Activated CD8-positive, alpha-beta T cell treated with anti-CD3 and anti-CD28 coated beads, Interleukin-2, amount 10 ng/mL, durations not matched to agents 7 days and 5 days (primary cell): ENCODE measurements at regions of chr2 and their contacts with region 1.

Region 1: GRCh38 chr2:181104512-181105115 is 124.2 kb downstream of the UBE2E3 start:
- DNase-seq: peak; percentile 41
- ATAC-seq: peak; percentile 12
- H3K4me3 Mint-ChIP-seq: no peak overlapping the region
- H3K27ac Mint-ChIP-seq: peak overlapping the region; percentile 1
- H3K4me1 Mint-ChIP-seq: peaks cover 47% of the 10 kb centered on the region
- H3K27me3 Mint-ChIP-seq: no peaks in the 10 kb centered on the region

Region 2: GRCh38 chr2:181123798-181124231 is 19.2 kb after region 1 on chr2:
- CTCF ChIA-PET with region 1: interaction called, 22 read pairs
- POLR2A ChIA-PET with region 1: no interaction called
- DNase-seq: peak; percentile 85
- ATAC-seq: peak; percentile 94
- H3K4me3 Mint-ChIP-seq: peak overlapping the region; percentile 77
- H3K27ac Mint-ChIP-seq: peak overlapping the region; percentile 86
- H3K4me1 Mint-ChIP-seq: peaks cover 70% of the 10 kb centered on the region
- H3K27me3 Mint-ChIP-seq: no peaks in the 10 kb centered on the region

Region 3: GRCh38 chr2:181140414-181140813 is 35.8 kb after region 1 on chr2:
- CTCF ChIA-PET with region 1: interaction called, 52 read pairs
- POLR2A ChIA-PET with region 1: interaction called, 6 read pairs
- DNase-seq: no peak
- ATAC-seq: no peak
- H3K4me3 Mint-ChIP-seq: peak overlapping the region; percentile 65
- H3K27ac Mint-ChIP-seq: peak overlapping the region; percentile 92
- H3K4me1 Mint-ChIP-seq: peaks cover 72% of the 10 kb centered on the region
- H3K27me3 Mint-ChIP-seq: no peaks in the 10 kb centered on the region

Region 4: DNA sequence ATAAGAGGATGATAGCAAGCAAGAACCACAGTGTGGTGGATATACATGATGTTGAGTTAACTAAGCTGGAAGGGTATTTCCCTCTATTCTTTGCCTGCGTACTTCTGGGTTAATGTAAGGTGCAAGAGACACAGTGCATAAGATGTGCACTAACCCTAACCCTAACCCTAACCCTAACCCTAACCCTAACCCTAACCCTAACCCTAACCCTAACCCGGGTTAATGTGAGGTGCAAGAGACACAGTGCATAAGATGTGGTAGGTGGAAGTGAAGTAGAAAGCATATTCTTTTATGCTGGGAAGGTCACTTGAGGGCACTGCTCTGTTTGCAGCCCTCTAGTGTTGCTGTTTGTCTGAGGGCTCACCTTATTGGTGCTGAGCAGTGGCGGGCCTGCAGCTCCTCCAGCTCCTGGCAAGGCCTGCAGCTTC is 171.0 kb after region 1 on chr2:
- CTCF ChIA-PET with region 1: interaction called, 17 read pairs
- POLR2A ChIA-PET with region 1: no interaction called
- DNase-seq: peak; percentile 50
- ATAC-seq: peak; percentile 92
- H3K4me3 Mint-ChIP-seq: no peak overlapping the region
- H3K27ac Mint-ChIP-seq: peak overlapping the region; percentile 84
- H3K4me1 Mint-ChIP-seq: peaks cover 39% of the 10 kb centered on the region
- H3K27me3 Mint-ChIP-seq: no peaks in the 10 kb centered on the region

Region 5: DNA sequence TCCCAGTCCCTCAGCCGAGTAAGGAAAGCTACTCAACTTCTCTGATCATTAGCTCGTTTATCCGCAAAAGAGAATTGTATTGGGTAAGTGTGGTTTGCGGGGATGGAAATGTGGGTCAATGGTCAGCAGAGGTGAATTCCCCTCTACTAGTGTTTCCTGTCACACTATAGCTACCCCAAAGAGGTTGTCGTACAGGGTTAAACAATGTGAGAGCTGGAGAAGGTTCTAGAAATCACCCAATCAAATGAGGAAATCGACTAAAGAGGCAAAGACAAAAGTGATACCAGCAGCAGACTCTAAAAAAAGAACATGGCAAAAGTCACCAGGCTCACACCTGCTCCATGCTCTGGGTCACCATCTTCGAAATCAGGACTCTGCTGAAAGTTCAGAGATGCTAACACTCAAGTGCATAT is 207.9 kb after region 1 on chr2:
- CTCF ChIA-PET with region 1: interaction called, 20 read pairs
- POLR2A ChIA-PET with region 1: interaction called, 5 read pairs
- DNase-seq: peak; percentile 65
- ATAC-seq: peak; percentile 65
- H3K4me3 Mint-ChIP-seq: peak overlapping the region; percentile 67
- H3K27ac Mint-ChIP-seq: peak overlapping the region; percentile 96
- H3K4me1 Mint-ChIP-seq: peaks cover 53% of the 10 kb centered on the region
- H3K27me3 Mint-ChIP-seq: no peaks in the 10 kb centered on the region

Region 6: DNA sequence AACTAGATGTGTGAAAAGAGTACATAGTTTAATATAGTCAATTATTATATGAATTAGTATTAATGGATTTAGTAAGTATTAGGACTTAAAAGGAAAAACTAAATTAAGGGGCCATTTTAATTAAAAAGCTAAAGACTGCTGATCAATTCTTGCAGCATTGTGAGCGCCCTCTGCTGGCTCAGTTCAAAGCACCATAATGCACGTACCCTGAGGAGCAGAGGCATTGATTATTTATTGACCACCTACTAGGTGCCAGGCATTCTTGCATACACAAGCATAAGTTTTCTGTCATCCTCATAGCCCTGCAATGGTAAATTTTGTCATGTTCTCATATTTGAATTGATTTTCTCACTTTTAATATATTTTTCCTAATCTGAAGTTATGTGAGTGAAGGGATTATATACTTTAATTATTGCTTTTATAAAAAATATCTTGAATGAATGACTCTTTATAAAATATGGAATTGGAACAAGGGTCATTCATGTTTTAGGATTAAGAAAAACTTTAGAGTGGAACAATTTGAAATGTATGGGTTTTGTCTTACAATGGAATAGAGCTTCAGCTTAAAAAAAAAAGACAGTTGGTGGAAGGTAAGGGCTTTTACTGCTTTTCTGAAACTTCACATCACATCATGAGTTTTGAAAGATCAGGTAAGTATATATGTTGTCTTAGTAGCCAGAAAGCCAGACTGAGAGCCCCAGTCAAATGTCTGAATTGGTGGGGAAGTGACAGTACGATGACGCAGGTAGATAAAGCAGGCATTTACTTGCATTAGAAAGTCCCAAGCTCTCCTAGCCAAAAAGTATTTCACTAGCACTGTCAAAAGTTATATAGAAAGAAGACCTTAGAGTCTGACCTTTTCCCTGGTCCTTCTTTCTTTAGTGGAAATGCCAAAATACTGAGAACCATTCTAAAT is 362.3 kb after region 1 on chr2:
- CTCF ChIA-PET with region 1: interaction called, 60 read pairs
- POLR2A ChIA-PET with region 1: no interaction called
- DNase-seq: peak; percentile 90
- ATAC-seq: peak; percentile 34
- H3K4me3 Mint-ChIP-seq: peak overlapping the region; percentile 22
- H3K27ac Mint-ChIP-seq: peak overlapping the region; percentile 62
- H3K4me1 Mint-ChIP-seq: peaks cover 85% of the 10 kb centered on the region
- H3K27me3 Mint-ChIP-seq: no peaks in the 10 kb centered on the region

Region 7: DNA sequence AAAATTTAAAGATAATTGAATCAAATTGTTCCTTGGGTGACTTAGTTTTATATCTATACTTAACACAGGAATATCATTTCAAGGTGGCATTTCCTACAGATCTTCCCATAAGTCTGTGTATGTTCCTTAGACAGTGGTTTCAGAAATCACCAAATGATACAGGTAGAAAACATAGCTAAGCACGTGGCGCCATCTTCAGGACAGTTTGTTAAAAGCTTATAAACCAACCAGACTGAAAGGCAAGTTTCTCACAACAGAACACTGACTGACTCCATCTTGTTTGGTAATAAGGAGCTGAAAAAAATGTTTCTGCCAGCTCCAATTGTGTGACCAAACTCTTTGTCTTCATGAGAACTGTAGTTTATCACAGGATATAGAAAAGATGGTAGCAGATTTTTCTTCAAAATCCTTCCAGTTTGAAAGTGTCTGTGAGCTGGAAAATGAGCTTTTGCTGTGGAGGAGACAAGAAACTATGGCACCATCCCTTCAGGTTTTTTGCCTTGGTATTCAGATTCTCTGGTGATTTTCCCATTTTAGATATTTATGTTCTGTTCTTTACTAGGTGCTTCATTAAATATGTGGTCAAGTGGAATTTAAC is 610.5 kb after region 1 on chr2:
- CTCF ChIA-PET with region 1: interaction called, 20 read pairs
- POLR2A ChIA-PET with region 1: no interaction called
- DNase-seq: peak; percentile 85
- ATAC-seq: peak; percentile 85
- H3K4me3 Mint-ChIP-seq: no peak overlapping the region
- H3K27ac Mint-ChIP-seq: no peak overlapping the region
- H3K4me1 Mint-ChIP-seq: no peaks in the 10 kb centered on the region
- H3K27me3 Mint-ChIP-seq: peaks cover 2% of the 10 kb centered on the region